AG04450 (cell line): ENCODE measurements at regions of chr2 and their contacts with region 1.

Region 1: GRCh38 chr2:231900486-231900942 is 25.7 kb downstream of the NPPC start:
- DNase-seq: peak; percentile 11
- H3K4me3 ChIP-seq: no peak overlapping the region
- H3K27ac ChIP-seq: no peak overlapping the region
- H3K27me3 ChIP-seq: peaks cover 20% of the 10 kb centered on the region
- CTCF ChIP-seq: peak; percentile 92

Region 2: GRCh38 chr2:231884438-231885140 is 15.9 kb before region 1 on chr2:
- CTCF ChIA-PET with region 1: interaction called, 12 read pairs
- POLR2A ChIA-PET with region 1: no interaction called
- DNase-seq: no peak
- H3K4me3 ChIP-seq: no peak overlapping the region
- H3K27ac ChIP-seq: no peak overlapping the region
- H3K27me3 ChIP-seq: peaks cover 19% of the 10 kb centered on the region
- CTCF ChIP-seq: no peak

Region 3: GRCh38 chr2:232473467-232473890 is 573.0 kb after region 1 on chr2:
- CTCF ChIA-PET with region 1: no interaction called
- POLR2A ChIA-PET with region 1: no interaction called
- DNase-seq: no peak
- H3K4me3 ChIP-seq: no peak overlapping the region
- H3K27ac ChIP-seq: no peak overlapping the region
- H3K27me3 ChIP-seq: peaks cover 39% of the 10 kb centered on the region
- CTCF ChIP-seq: no peak